ENCODE measurements at regions of chr6 and their contacts with region 1.

Region 1: DNA sequence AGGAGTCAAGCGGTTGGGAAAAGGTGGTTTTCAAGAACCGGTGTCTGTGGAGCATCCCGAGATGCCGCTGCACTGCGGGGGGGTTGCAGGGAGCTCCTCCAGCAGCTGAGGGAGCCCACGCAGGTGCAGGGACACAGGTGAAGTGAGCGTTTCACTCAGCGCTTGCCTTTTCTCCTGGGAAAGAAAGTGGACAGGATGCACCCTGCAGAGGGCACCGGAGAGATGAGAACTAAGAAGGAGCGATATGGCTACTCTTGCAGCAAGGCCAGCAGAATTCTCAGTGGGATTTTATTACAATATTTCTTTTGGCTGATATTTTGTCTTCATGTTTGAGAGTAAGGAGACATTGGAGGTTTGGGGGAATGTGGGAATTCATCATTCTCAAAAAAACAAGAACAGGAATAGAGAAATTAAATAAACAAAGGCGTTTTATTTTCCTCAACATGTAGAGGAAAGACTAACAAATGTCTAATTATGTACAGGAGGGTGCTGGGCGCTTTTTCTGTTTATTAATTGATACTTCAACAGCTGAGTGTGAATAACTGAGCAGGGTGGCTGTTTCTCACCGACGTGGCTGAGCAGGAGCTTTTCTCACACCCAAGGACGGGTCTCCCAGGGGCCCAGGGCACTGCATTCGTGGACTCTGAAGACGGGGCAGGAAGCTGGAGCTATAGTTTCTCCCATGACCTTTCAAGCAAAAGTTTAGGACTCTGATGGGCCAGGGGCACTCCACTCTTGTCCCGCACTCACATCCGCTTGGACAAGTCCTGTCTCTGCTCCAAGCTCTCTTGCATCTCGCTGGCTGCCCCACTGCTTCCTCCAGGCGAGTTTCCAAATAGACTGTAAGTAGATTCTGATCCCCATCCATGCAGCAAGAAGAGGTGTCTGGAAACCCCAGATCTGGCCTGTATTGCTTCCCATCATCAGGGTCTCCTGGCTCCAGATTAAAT is 176.1 kb downstream of the SMOC2 start:
- DNase-seq: no peak
- H3K4me3 ChIP-seq: no peak overlapping the region
- H3K27ac ChIP-seq: no peak overlapping the region
- H3K4me1 ChIP-seq: peaks cover 0 to 37% (median 28%) of the 10 kb centered on the region in 4 donors
- H3K27me3 ChIP-seq: no peaks in the 10 kb centered on the region
- CTCF ChIP-seq: peak; percentile 18 to 54 (median 47)
- EP300 ChIP-seq: no peak
- POLR2A ChIP-seq: no peak

Region 2: GRCh38 chr6:168496997-168497331 is 120.1 kb before region 1 on chr6:
- intact Hi-C with region 1: no loop called
- DNase-seq: peak; percentile 78
- H3K4me3 ChIP-seq: no peak overlapping the region
- H3K27ac ChIP-seq: no peak overlapping the region
- H3K4me1 ChIP-seq: peaks cover 0 to 24% (median 15%) of the 10 kb centered on the region in 4 donors
- H3K27me3 ChIP-seq: no peaks in the 10 kb centered on the region
- CTCF ChIP-seq: no peak
- EP300 ChIP-seq: no peak
- POLR2A ChIP-seq: no peak

Region 3: DNA sequence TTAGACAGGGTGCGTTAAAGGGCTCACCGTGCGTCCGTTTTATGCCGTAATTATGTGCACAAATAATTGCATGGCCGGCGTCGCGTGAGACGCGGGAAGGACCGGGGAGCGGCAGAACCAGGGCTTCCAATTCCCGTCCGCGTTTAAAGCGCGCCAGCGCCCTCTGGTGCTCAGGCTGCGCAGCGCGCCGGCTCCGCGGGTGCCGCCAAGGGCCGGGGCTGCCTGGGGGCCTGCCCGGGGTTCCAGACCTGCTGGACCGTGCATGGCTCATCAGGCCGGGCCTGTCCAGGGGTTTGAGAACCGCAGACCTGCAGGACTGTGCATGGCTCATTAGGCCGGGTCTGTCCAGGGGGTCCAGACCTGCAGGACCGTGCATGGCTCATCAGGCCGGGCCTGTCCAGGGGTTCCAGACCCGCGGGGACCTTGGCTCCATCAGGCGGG is 267.6 kb after region 1 on chr6:
- intact Hi-C with region 1: loop called (anchors 5 kb)
- DNase-seq: no peak
- H3K4me3 ChIP-seq: peak overlapping the region; percentile 15 to 43 (median 18)
- H3K27ac ChIP-seq: no peak overlapping the region
- H3K4me1 ChIP-seq: peaks cover 0 to 14% (median 9%) of the 10 kb centered on the region in 4 donors
- H3K27me3 ChIP-seq: peaks cover 0 to 8% (median 0%) of the 10 kb centered on the region in 4 donors
- CTCF ChIP-seq: peak in 2 of 3 experiments; percentile 94
- EP300 ChIP-seq: no peak
- POLR2A ChIP-seq: no peak

Measured in esophagus muscularis mucosa (tissue), 4 donors.